ENCODE measurements at regions of chr7 and their contacts with region 1.

Region 1: DNA sequence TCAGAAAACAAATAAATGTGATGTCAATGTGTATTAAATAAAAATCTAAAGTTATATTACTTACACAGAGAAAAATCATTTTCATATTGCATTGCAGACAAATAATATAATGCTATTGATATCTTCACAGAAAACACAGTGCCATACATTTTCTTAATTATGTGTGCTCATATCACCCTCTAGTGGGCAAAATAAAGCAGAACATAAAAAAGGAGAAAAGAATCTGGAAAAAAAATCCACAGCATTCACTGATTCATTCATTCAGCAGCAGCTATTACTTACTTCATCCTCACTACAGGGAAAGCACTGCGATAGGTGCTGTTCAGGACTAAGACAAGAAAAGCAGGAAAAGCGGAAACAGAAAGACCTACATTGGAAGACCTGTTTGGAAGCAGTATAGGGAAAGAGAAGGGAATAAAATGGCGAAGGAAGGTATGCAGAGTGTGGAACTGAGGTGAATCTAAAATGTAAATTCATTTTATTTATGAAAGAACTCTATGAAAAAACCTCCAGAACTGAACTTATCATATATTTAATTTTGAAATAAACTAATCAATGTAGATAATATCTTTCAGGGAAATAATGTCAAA is 73.2 kb downstream of the POT1 start:
- DNase-seq: peak in 2 of 9 experiments; percentile 15 to 30
- ATAC-seq: no peak
- H3K4me3 ChIP-seq: no peak overlapping the region
- H3K4me3 Mint-ChIP-seq: no peak overlapping the region
- H3K27ac ChIP-seq: no peak overlapping the region
- H3K27ac Mint-ChIP-seq: no peak overlapping the region
- H3K4me1 ChIP-seq: no peaks in the 10 kb centered on the region
- H3K4me1 Mint-ChIP-seq: no peaks in the 10 kb centered on the region
- H3K27me3 ChIP-seq: no peaks in the 10 kb centered on the region
- H3K27me3 Mint-ChIP-seq: no peaks in the 10 kb centered on the region
- CTCF ChIP-seq: peak; percentile 76

Region 2: DNA sequence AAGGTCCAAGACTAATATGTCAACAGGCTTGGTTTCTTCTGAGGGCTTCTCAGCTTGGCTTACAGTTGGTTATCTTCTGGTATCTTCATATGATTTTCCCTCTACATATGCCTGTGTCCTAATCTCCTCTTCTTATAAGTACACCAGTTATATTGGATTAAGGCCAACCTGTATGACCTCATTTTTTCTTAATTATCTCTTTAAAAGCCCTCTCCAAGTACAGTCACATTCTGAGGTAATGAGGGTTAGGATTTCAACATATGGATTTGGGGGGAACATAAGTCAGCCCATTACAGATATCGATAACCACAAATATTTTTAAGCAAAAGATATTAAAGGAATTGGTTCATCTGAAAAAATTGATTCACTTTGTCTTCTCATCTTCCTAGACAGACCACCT is 1371.2 kb before region 1 on chr7:
- CTCF ChIA-PET with region 1: no interaction called
- POLR2A ChIA-PET with region 1: no interaction called
- intact Hi-C with region 1: loop called (anchors 5 to 10 kb)
- DNase-seq: no peak
- ATAC-seq: no peak
- H3K4me3 ChIP-seq: no peak overlapping the region
- H3K4me3 Mint-ChIP-seq: no peak overlapping the region
- H3K27ac ChIP-seq: no peak overlapping the region
- H3K27ac Mint-ChIP-seq: no peak overlapping the region
- H3K4me1 ChIP-seq: no peaks in the 10 kb centered on the region
- H3K4me1 Mint-ChIP-seq: no peaks in the 10 kb centered on the region
- H3K27me3 ChIP-seq: no peaks in the 10 kb centered on the region
- H3K27me3 Mint-ChIP-seq: peaks cover 15% of the 10 kb centered on the region
- CTCF ChIP-seq: no peak

Region 3: GRCh38 chr7:123494193-123494796 is 1362.1 kb before region 1 on chr7:
- CTCF ChIA-PET with region 1: no interaction called
- POLR2A ChIA-PET with region 1: no interaction called
- intact Hi-C with region 1: loop called (anchors 5 to 10 kb)
- DNase-seq: peak in 5 of 9 experiments; percentile 23 to 63 (median 35)
- ATAC-seq: no peak
- H3K4me3 ChIP-seq: no peak overlapping the region
- H3K4me3 Mint-ChIP-seq: no peak overlapping the region
- H3K27ac ChIP-seq: no peak overlapping the region
- H3K27ac Mint-ChIP-seq: no peak overlapping the region
- H3K4me1 ChIP-seq: no peaks in the 10 kb centered on the region
- H3K4me1 Mint-ChIP-seq: no peaks in the 10 kb centered on the region
- H3K27me3 ChIP-seq: peaks cover 0 to 2% of the 10 kb centered on the region in 2 experiments
- H3K27me3 Mint-ChIP-seq: peaks cover 11% of the 10 kb centered on the region
- CTCF ChIP-seq: peak; percentile 93

Region 4: DNA sequence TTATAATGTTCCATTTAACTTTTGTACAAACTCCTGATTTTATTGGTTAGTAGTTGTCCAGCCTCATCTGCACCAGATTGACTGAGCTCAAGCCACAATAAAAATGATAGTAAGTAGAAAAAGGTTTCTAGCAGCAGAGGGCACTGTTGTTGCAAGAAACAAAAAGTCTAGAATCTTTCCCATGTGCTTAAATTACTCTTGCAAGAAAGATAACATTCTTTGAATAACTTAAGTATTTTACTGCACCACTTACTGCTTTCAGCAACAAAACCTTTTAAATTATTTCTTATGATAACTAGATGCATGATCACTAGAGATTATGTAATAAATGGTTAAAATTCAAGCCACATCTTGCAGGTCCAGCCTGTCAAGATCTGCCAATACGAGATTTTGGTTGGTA is 1173.7 kb before region 1 on chr7:
- CTCF ChIA-PET with region 1: no interaction called
- POLR2A ChIA-PET with region 1: no interaction called
- intact Hi-C with region 1: loop called (anchors 2 to 5 kb)
- DNase-seq: peak in 3 of 9 experiments; percentile 7 to 60 (median 53)
- ATAC-seq: no peak
- H3K4me3 ChIP-seq: no peak overlapping the region
- H3K4me3 Mint-ChIP-seq: no peak overlapping the region
- H3K27ac ChIP-seq: no peak overlapping the region
- H3K27ac Mint-ChIP-seq: no peak overlapping the region
- H3K4me1 ChIP-seq: no peaks in the 10 kb centered on the region
- H3K4me1 Mint-ChIP-seq: no peaks in the 10 kb centered on the region
- H3K27me3 ChIP-seq: no peaks in the 10 kb centered on the region
- H3K27me3 Mint-ChIP-seq: no peaks in the 10 kb centered on the region
- CTCF ChIP-seq: peak; percentile 69

Region 5: GRCh38 chr7:125347269-125347668 is 490.9 kb after region 1 on chr7:
- CTCF ChIA-PET with region 1: no interaction called
- POLR2A ChIA-PET with region 1: no interaction called
- intact Hi-C with region 1: no loop called
- DNase-seq: no peak
- ATAC-seq: no peak
- H3K4me3 ChIP-seq: no peak overlapping the region
- H3K4me3 Mint-ChIP-seq: no peak overlapping the region
- H3K27ac ChIP-seq: no peak overlapping the region
- H3K27ac Mint-ChIP-seq: no peak overlapping the region
- H3K4me1 ChIP-seq: no peaks in the 10 kb centered on the region
- H3K4me1 Mint-ChIP-seq: no peaks in the 10 kb centered on the region
- H3K27me3 ChIP-seq: no peaks in the 10 kb centered on the region
- H3K27me3 Mint-ChIP-seq: no peaks in the 10 kb centered on the region
- CTCF ChIP-seq: no peak

Measured in CD8-positive, alpha-beta T cell (primary cell).